Mammary epithelial cell (primary cell): ENCODE measurements at regions of chr1 and their contacts with region 1.

Region 1: GRCh38 chr1:22025368-22026155 is 24.1 kb downstream of the CELA3A start:
- DNase-seq: peak; percentile 89
- H3K4me3 ChIP-seq: peak overlapping the region; percentile 76 to 89 (median 77)
- H3K27ac ChIP-seq: peak overlapping the region; percentile 94
- H3K4me1 ChIP-seq: peaks cover 11% of the 10 kb centered on the region
- H3K27me3 ChIP-seq: no peaks in the 10 kb centered on the region
- CTCF ChIP-seq: no peak

Region 2: DNA sequence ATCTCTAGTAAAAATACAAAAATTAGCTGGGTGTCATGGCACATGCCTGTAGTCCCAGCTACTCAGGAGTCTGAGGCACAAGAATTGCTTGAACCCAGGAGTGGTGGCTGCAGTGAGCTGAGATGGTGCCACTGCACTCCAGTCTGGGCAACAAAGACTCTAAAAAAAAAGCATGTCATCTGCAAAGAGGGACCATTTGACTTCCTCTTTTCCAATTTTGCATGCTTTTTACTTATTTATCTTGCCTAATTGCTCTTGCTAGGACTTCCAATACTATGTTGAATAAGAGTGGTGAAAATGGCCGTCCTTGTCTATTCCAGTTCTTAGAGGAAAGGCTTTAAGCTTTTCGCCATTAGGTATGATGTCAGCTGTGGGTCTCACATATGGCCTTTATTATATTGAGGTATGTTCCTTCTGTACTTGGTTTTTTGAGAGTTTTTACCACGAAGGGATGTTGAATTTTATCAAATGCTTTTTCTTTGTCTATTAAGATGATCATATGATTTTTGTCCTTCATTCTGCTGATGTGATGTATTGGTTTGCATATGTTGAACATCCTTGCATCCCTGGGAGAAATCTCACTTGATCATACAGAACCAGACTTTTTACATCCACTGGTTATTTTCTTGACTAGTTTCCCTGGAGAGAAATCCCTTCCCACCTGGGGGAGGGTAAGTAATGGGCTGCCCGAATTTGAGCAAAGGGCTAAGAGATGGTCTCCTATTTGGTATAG is 339.4 kb before region 1 on chr1:
- CTCF ChIA-PET with region 1: no interaction called
- dilution Hi-C with region 1: no loop called
- in situ Hi-C with region 1: no loop called
- intact Hi-C with region 1: no loop called
- DNase-seq: no peak
- H3K4me3 ChIP-seq: no peak overlapping the region
- H3K27ac ChIP-seq: no peak overlapping the region
- H3K4me1 ChIP-seq: no peaks in the 10 kb centered on the region
- H3K27me3 ChIP-seq: no peaks in the 10 kb centered on the region
- CTCF ChIP-seq: no peak

Region 3: GRCh38 chr1:21822349-21822748 is 203.2 kb before region 1 on chr1:
- CTCF ChIA-PET with region 1: no interaction called
- dilution Hi-C with region 1: no loop called
- in situ Hi-C with region 1: no loop called
- intact Hi-C with region 1: no loop called
- DNase-seq: no peak
- H3K4me3 ChIP-seq: no peak overlapping the region
- H3K27ac ChIP-seq: no peak overlapping the region
- H3K4me1 ChIP-seq: no peaks in the 10 kb centered on the region
- H3K27me3 ChIP-seq: no peaks in the 10 kb centered on the region
- CTCF ChIP-seq: no peak

Region 4: GRCh38 chr1:22039594-22040285 is 14.2 kb after region 1 on chr1:
- CTCF ChIA-PET with region 1: no interaction called
- dilution Hi-C with region 1: no loop called
- in situ Hi-C with region 1: no loop called
- intact Hi-C with region 1: loop called (anchors 2 kb)
- DNase-seq: peak; percentile 57
- H3K4me3 ChIP-seq: no peak overlapping the region
- H3K27ac ChIP-seq: no peak overlapping the region
- H3K4me1 ChIP-seq: peaks cover 43% of the 10 kb centered on the region
- H3K27me3 ChIP-seq: no peaks in the 10 kb centered on the region
- CTCF ChIP-seq: no peak

Region 5: DNA sequence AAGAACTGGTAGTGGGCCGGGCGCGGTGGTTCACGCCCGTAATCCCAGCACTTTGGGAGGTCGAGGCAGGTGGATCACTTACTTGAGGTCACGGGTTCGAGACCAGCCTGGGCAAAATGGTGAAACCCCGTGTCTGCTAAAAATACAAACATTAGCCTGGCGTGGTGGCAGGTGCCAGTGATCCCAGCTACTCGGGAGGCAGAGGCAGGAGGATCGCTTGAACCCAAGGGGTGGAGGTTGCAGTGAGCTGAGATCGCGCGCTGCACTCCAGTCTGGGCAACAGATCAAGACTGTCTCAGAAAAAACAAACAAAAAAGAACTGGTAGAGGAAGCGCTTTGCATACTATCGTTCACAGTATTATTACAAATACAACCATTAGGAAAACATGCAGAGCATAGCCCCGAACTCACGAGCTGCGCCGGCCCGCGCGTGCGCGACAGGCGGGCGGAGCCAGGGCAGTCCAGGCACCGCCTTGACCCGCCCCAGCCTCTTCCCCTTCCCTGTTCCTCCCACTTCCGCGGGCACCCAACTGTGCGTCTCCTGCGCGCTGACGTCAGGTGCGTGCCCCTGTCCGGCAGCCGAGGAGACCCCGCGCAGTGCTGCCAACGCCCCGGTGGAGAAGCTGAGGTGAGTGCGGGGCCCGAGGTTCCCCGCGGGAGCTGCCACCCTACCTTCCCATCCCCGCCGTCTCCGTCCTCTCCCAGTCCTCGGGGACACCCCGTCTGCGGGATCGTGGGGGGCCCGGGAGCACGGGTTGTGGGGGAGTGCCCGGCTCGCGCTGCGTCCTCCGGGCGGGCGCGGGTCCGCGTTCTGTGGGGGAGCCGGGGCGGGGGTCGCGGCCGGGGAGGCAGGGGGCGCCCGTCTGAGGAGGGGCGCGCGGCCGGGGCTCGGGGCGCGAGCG is 26.8 kb after region 1 on chr1 and contains the start of gene CDC42:
- CTCF ChIA-PET with region 1: interaction called, 4 read pairs
- dilution Hi-C with region 1: no loop called
- in situ Hi-C with region 1: no loop called
- intact Hi-C with region 1: loop called (anchors 2 kb)
- DNase-seq: peak; percentile 95
- H3K4me3 ChIP-seq: peak within 1 kb of the TSS; percentile 73 to 86 (median 77)
- H3K27ac ChIP-seq: peak within 1 kb of the TSS; percentile 79
- H3K4me1 ChIP-seq: peaks cover 15% of the 10 kb centered on the region
- H3K27me3 ChIP-seq: no peaks in the 10 kb centered on the region
- CTCF ChIP-seq: no peak
- total RNA-seq, gene CDC42: 234 to 414 TPM

Region 6: GRCh38 chr1:22089787-22090186 is 64.2 kb after region 1 on chr1:
- CTCF ChIA-PET with region 1: no interaction called
- dilution Hi-C with region 1: no loop called
- in situ Hi-C with region 1: no loop called
- intact Hi-C with region 1: loop called (anchors 5 kb)
- DNase-seq: no peak
- H3K4me3 ChIP-seq: no peak overlapping the region
- H3K27ac ChIP-seq: no peak overlapping the region
- H3K4me1 ChIP-seq: peaks cover 29% of the 10 kb centered on the region
- H3K27me3 ChIP-seq: no peaks in the 10 kb centered on the region
- CTCF ChIP-seq: no peak

Region 7: GRCh38 chr1:22131875-22132486 is 106.4 kb after region 1 on chr1:
- CTCF ChIA-PET with region 1: no interaction called
- dilution Hi-C with region 1: no loop called
- in situ Hi-C with region 1: no loop called
- intact Hi-C with region 1: no loop called
- DNase-seq: peak; percentile 26
- H3K4me3 ChIP-seq: no peak overlapping the region
- H3K27ac ChIP-seq: no peak overlapping the region
- H3K4me1 ChIP-seq: peaks cover 16% of the 10 kb centered on the region
- H3K27me3 ChIP-seq: no peaks in the 10 kb centered on the region
- CTCF ChIP-seq: peak; percentile 82 to 90

Region 8: DNA sequence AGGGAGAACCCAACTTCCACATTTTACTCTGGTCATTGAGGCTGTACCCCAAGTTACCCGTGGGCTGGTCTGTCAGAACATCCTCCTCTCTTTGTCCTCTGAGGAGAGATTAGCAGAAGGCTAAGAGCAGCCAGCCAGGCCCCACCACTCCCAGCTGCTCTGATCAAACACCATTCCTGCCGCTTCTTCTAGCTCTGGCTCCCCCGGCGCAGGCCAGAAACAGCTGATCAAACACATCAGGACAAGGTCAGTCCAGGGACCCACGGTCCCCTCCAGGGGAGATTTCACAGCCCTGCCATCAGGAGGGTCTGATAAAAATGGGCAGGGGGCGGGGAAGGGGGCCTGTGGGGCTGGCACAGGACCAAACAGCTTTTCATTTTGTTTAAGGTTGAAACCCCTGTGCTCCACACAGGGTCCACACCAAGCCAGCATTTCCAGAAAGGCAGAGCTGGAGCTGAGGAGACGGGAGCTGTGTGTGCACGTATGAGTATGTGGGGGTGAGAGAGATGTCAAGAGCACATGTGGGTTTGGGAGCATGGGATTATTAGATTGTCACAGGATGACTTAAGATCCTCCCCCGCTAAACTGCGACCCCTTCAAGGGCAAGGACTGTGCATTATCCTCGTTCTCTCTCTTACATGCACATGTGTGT is 507.8 kb after region 1 on chr1:
- CTCF ChIA-PET with region 1: interaction called, 12 read pairs
- dilution Hi-C with region 1: no loop called
- in situ Hi-C with region 1: no loop called
- intact Hi-C with region 1: no loop called
- DNase-seq: no peak
- H3K4me3 ChIP-seq: no peak overlapping the region
- H3K27ac ChIP-seq: no peak overlapping the region
- H3K4me1 ChIP-seq: peaks cover 4% of the 10 kb centered on the region
- H3K27me3 ChIP-seq: no peaks in the 10 kb centered on the region
- CTCF ChIP-seq: no peak